SK-N-SH (cell line): ENCODE measurements at regions of chr1 and their contacts with region 1.

Region 1: GRCh38 chr1:27671964-27672749 is at the start of gene IFI6:
- DNase-seq: peak; percentile 91
- H3K4me3 ChIP-seq: peak within 1 kb of the TSS; percentile 54 to 67
- H3K27ac ChIP-seq: peak within 1 kb of the TSS; percentile 73 to 89
- H3K4me1 ChIP-seq: peaks cover 6 to 20% of the 10 kb centered on the region in 2 experiments; a peak in 3 of 4 replicates
- H3K27me3 ChIP-seq: no peaks in the 10 kb centered on the region
- CTCF ChIP-seq: peak; percentile 44
- EP300 ChIP-seq: peak in 1 of 2 experiments; percentile 35; a peak in 1 of 4 replicates
- RAD21 ChIP-seq: peak; percentile 52
- polyA plus RNA-seq, gene IFI6: 29.0 and 35.6 TPM in 2 replicates

Region 2: GRCh38 chr1:27689423-27690173 is 17.4 kb after region 1 on chr1:
- CTCF ChIA-PET with region 1: interaction called, 12 read pairs
- POLR2A ChIA-PET with region 1: no interaction called
- DNase-seq: no peak
- H3K4me3 ChIP-seq: no peak overlapping the region
- H3K27ac ChIP-seq: no peak overlapping the region
- H3K4me1 ChIP-seq: no peaks in the 10 kb centered on the region
- H3K27me3 ChIP-seq: no peaks in the 10 kb centered on the region
- CTCF ChIP-seq: no peak
- EP300 ChIP-seq: no peak
- RAD21 ChIP-seq: no peak

Region 3: GRCh38 chr1:27719286-27720251 is 47.4 kb after region 1 on chr1:
- CTCF ChIA-PET with region 1: interaction called, 27 read pairs
- POLR2A ChIA-PET with region 1: no interaction called
- DNase-seq: peak; percentile 24
- H3K4me3 ChIP-seq: no peak overlapping the region
- H3K27ac ChIP-seq: no peak overlapping the region
- H3K4me1 ChIP-seq: no peaks in the 10 kb centered on the region
- H3K27me3 ChIP-seq: peaks cover 3% of the 10 kb centered on the region; the same call in 1 of the 2 replicates
- CTCF ChIP-seq: peak; percentile 49
- EP300 ChIP-seq: no peak
- RAD21 ChIP-seq: peak; percentile 38

Region 4: GRCh38 chr1:27725374-27726173 is 53.4 kb after region 1 on chr1 and contains the start of gene FAM76A:
- CTCF ChIA-PET with region 1: interaction called, 27 read pairs
- POLR2A ChIA-PET with region 1: interaction called, 9 read pairs
- DNase-seq: peak; percentile 99
- H3K4me3 ChIP-seq: peak within 1 kb of the TSS; percentile 70 to 89
- H3K27ac ChIP-seq: peak within 1 kb of the TSS; percentile 62 to 74
- H3K4me1 ChIP-seq: peaks cover 3 to 5% of the 10 kb centered on the region in 2 experiments; a peak in 2 of 4 replicates
- H3K27me3 ChIP-seq: no peaks in the 10 kb centered on the region
- CTCF ChIP-seq: peak; percentile 53
- EP300 ChIP-seq: no peak
- RAD21 ChIP-seq: 0 out of 2 replicates have a peak, but pooled peaks have one; percentile 39
- polyA plus RNA-seq, gene FAM76A: 2.9 and 4.2 TPM in 2 replicates